ENCODE measurements at regions of chr10 and their contacts with region 1.

Region 1: DNA sequence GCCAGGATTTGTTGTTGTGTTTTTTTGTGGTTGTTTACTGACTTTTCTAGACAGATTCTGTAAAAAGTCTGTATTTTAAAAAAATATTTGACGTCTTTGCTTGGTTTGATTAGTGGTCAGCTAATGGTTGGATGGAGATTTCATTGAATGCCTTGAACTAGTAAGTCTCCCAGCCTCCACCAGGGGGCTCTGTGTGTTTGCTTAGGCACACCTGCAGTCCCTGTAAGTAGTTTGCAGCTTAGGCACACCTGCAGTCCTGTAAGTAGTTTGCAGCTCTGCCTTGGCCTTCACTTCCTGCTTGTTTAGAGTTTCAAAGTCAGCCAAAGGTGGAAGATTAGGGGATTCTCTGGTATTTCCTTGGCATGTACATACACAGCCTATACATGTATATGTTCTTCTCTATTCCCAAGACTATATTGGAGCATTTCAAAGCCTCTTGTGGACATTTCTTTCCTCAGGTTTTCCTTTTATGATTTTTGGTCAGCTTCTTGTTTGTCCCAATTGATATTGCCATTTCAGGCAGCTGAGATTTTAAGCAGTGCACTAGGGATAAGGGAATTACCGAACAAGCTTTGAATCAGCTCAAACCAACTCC is 101.6 kb downstream of the CCSER2 start:
- DNase-seq: peak; percentile 32 to 75 (median 67)
- ATAC-seq: peak; percentile 87
- H3K4me3 ChIP-seq: no peak overlapping the region
- H3K4me3 Mint-ChIP-seq: no peak overlapping the region
- H3K27ac ChIP-seq: no peak overlapping the region
- H3K27ac Mint-ChIP-seq: peak overlapping the region; percentile 20
- H3K4me1 ChIP-seq: peaks cover 15% of the 10 kb centered on the region
- H3K4me1 Mint-ChIP-seq: peaks cover 64% of the 10 kb centered on the region
- H3K27me3 ChIP-seq: no peaks in the 10 kb centered on the region
- H3K27me3 Mint-ChIP-seq: no peaks in the 10 kb centered on the region
- CTCF ChIP-seq: peak; percentile 78

Region 2: DNA sequence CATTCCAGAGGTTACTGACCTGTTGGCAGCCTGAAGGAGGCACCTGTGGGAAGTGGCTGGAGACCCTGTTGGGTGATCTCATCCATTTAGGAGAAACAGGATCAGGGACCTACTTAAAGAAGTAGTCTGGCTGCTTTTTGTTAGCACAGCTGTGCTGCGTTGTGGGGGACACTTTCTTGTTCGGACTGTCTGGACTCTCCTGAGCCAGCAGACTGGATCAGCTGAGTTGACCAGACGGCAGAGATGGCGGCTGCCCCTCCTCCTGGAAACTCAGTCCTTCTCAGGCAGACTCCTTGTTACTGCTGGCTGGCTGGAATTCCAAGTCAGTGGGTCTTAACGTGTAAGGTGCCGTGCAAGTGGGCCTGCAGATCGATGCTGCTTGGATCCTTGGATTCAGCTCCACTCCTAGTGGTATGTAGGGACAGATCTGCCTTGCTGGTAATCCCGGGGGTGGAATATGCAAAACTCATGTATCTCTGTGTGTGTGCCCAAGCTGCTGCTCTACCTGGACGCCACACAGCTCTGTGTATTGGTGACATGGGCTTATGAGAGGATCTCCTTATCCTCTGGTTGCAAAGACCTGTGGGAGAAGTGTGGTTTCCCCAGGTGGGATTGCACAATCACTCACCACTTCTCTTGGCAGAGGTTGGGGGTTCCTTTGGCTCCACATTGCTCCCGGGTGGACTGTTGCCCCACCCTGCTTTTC is 14.3 kb before region 1 on chr10:
- CTCF ChIA-PET with region 1: interaction called, 11 read pairs
- POLR2A ChIA-PET with region 1: no interaction called
- intact Hi-C with region 1: loop called in 1 of 2 experiments (anchors 2 kb)
- DNase-seq: no peak
- ATAC-seq: no peak
- H3K4me3 ChIP-seq: no peak overlapping the region
- H3K4me3 Mint-ChIP-seq: no peak overlapping the region
- H3K27ac ChIP-seq: no peak overlapping the region
- H3K27ac Mint-ChIP-seq: no peak overlapping the region
- H3K4me1 ChIP-seq: peaks cover 5% of the 10 kb centered on the region
- H3K4me1 Mint-ChIP-seq: peaks cover 48% of the 10 kb centered on the region
- H3K27me3 ChIP-seq: no peaks in the 10 kb centered on the region
- H3K27me3 Mint-ChIP-seq: no peaks in the 10 kb centered on the region
- CTCF ChIP-seq: no peak

Region 3: DNA sequence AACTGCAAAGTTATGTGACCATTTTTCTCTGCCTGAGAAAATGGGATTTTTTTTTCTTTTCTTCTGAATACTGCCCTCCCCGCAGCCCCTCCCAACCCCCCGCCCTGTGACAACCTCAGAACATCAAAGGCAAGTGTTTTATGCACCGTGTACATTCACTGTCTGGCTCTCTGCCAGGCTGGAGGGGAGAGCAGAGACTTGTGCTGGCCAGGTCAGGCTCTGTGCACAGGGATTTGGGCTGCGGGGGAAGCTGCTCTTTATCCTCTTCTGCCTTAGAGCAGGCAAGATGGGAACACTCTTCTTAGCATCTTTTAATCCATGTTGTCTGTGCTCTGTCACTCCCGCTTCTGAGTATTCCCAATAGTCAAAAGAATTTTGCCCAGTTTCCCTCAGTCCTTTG is 93.5 kb after region 1 on chr10:
- CTCF ChIA-PET with region 1: no interaction called
- POLR2A ChIA-PET with region 1: no interaction called
- intact Hi-C with region 1: no loop called
- DNase-seq: peak in 3 of 9 experiments; percentile 21 to 37 (median 34)
- ATAC-seq: no peak
- H3K4me3 ChIP-seq: no peak overlapping the region
- H3K4me3 Mint-ChIP-seq: no peak overlapping the region
- H3K27ac ChIP-seq: no peak overlapping the region
- H3K27ac Mint-ChIP-seq: no peak overlapping the region
- H3K4me1 ChIP-seq: peaks cover 3% of the 10 kb centered on the region
- H3K4me1 Mint-ChIP-seq: peaks cover 7% of the 10 kb centered on the region
- H3K27me3 ChIP-seq: no peaks in the 10 kb centered on the region
- H3K27me3 Mint-ChIP-seq: no peaks in the 10 kb centered on the region
- CTCF ChIP-seq: no peak